ENCODE measurements at regions of chr13 and their contacts with region 1.

Region 1: DNA sequence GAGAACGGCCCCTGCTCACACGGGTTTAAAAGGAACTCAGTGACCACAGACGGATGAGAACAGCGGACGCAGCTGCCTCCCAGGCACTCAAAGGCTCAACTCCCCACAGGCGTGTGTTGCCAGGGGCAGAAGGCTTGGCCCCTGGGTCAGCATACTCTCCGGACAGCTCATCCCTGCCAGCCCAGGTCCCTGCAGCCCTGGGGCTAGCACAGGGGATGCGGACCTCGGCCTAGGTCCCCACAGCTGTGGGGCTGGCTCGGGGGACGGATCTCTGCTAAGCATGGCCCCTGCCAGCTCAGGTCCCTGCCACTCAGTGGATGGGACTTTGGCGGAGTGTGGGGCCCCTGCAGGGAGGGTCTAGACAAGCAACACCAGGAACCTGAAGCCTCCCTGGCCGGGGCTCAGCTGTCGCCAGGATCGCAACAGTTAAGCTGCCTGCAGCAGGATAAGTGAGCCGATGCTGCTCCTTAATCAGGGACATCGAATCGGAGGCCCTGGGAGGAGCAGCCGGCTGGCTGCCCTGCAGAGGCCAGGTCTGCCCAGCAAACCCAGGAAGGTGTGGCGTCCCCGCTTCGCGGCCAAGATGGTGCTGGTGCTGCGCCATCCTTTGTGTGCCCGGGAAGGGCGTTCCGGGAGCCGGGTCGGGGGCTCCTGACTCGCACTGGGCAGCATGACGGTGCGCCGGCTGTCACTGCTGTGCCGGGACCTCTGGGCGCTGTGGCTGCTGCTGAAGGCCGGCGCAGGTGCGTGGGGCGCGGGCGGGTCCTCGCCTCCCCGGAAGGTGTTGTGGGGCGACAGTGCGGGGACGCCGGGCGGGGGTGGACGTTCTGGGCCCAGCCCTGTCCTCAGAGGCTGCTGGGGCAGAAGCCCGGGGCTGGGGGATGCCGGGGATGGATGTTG is 32.5 kb downstream of the MCF2L start:
- DNase-seq: peak; percentile 95
- H3K4me3 ChIP-seq: peak overlapping the region; percentile 46 to 52
- H3K27ac ChIP-seq: peak overlapping the region in 1 of 2 experiments; percentile 91; a peak in 2 of 4 replicates
- H3K4me1 ChIP-seq: peaks cover 0 to 47% of the 10 kb centered on the region in 2 experiments; a peak in 2 of 4 replicates
- H3K27me3 ChIP-seq: peaks cover 4% of the 10 kb centered on the region; the same call in 1 of the 2 replicates
- CTCF ChIP-seq: no peak
- EP300 ChIP-seq: peak in 1 of 2 experiments; percentile 43; a peak in 1 of 4 replicates
- RAD21 ChIP-seq: no peak; the same call in 1 of the 2 replicates

Region 2: DNA sequence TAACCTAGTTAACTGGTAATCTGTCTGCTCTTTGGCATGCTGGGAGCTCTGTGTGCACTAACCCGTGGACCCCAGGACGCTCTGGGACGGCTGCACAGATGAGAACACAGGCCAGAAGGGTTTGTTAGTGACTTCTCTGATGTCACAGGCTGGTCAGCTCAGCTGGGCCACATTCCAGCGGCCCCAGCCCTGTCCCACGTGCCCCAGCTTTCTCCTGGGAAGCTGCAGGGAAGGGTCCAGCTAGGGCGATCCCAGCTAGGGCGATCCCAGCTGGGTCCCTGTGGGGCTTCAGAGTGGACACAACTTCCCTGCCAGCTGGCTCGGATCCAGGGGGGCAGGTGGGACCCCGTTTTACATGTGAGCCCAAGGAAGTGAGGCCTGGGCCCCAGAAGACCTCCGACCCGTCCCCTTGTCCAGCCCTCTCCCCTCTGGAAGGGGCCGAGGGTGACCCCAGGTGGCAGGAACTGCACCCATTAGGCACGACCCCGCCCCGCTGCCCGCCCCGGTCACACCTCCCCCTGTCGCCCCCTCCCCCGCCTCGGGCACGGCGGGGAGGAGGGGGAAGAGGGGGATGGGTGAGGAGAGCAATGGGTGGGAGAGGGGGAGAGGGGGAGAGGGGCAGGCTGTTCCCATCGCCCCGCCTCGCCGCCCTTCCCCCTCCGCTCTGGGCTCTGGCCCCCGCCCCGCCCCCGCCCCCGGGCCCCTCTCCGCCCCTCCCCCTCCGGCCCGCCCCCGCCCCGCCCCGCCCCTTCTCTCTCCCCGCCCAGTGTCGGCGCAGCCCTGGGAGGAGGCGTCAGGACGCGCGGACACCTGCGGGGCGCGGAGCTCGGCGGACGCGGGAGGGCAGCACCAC is 107.7 kb before region 1 on chr13:
- CTCF ChIA-PET with region 1: no interaction called
- POLR2A ChIA-PET with region 1: no interaction called
- DNase-seq: peak; percentile 94
- H3K4me3 ChIP-seq: peak overlapping the region in 1 of 2 experiments; percentile 52; a peak in 2 of 4 replicates
- H3K27ac ChIP-seq: peak overlapping the region in 1 of 2 experiments; percentile 64; a peak in 1 of 4 replicates
- H3K4me1 ChIP-seq: peaks cover 0 to 12% of the 10 kb centered on the region in 2 experiments; a peak in 1 of 4 replicates
- H3K27me3 ChIP-seq: peaks cover 10% of the 10 kb centered on the region
- CTCF ChIP-seq: no peak
- EP300 ChIP-seq: no peak
- RAD21 ChIP-seq: no peak

Region 3: DNA sequence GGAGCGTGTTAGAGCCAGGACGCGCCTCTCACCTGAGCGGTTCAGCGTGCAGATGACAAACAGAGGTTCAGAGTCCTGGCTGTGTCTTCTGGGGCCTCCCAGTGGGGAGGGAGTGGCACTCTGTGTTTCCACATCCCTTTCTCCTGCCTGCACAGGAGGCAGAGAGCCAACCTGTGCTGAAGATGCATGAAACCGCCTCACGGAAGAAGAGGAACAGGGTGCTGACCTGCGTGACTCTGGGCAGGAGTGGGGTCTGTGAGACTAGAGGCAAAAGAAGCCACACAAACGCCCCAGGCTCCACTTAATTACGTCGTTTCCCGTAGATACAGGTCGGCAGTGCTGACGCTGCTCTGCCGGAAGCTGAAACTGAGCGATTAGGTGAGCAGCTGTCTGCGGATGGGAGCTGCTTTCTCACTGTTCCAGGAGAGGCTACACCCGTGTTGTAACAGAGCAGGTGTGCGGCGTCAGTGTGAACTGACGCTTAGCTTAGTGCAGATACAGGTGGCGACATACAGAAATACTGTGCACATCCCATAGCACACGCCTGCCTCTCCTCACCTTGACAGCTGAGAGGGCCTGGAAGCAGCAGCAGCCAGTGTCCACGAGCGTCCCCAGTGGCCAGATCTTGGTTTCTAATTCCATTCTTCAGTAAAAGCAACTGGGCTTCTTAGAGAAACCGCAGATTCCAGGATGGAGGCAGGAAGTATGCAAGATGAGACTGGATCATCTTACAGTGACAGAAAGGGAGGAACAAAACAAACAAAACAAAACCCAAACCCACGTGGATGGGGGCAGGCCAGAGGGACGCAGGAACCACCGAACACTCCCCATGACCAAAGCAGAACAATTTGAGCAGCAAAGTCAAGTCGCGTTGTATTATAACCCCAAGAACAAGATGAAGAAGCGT is 70.2 kb before region 1 on chr13:
- CTCF ChIA-PET with region 1: interaction called, 11 read pairs
- POLR2A ChIA-PET with region 1: interaction called, 4 read pairs
- DNase-seq: peak; percentile 71
- H3K4me3 ChIP-seq: no peak overlapping the region
- H3K27ac ChIP-seq: peak overlapping the region in 1 of 2 experiments; percentile 43; a peak in 1 of 4 replicates
- H3K4me1 ChIP-seq: peaks cover 0 to 50% of the 10 kb centered on the region in 2 experiments; a peak in 2 of 4 replicates
- H3K27me3 ChIP-seq: peaks cover 13% of the 10 kb centered on the region; the same call in 1 of the 2 replicates
- CTCF ChIP-seq: peak; percentile 69
- EP300 ChIP-seq: no peak
- RAD21 ChIP-seq: peak; percentile 58

Region 4: DNA sequence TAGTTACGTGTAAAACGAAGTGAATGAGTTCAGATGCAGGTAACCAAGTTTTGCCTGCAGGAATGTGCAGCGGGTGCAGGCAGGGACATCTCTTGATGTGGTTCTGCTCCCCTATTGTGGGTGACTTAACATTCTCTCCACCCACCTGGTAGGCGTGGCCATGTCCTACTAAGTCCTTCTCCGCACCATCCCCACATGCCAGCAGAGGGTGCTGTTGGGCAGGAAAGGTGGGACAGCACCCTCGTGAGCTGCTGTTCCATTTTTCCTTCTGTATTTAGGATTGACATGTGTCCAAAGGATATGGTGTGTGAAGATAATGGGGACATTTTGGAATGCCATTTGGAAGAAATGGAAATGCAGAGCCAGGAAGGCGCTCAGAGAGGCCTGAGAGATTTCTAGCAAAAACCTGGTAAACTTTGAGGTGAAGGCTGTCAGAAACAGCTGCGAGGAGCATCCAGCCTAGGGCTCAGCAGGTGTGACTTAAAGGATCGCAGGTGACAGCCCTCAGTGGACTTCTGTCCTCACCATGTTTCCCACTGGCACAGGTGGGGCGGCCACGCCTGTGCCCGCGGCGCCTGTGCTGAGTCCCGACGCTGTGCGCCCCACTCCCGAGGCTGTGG is 58.7 kb before region 1 on chr13:
- CTCF ChIA-PET with region 1: interaction called, 70 read pairs
- POLR2A ChIA-PET with region 1: interaction called, 15 read pairs
- DNase-seq: peak; percentile 93
- H3K4me3 ChIP-seq: peak overlapping the region; percentile 57 to 67
- H3K27ac ChIP-seq: no peak overlapping the region; a peak in 1 of 4 replicates
- H3K4me1 ChIP-seq: peaks cover 0 to 27% of the 10 kb centered on the region in 2 experiments; a peak in 2 of 4 replicates
- H3K27me3 ChIP-seq: no peaks in the 10 kb centered on the region; the same call in 1 of the 2 replicates
- CTCF ChIP-seq: peak; percentile 95
- EP300 ChIP-seq: peak in 1 of 2 experiments; percentile 48; a peak in 1 of 4 replicates
- RAD21 ChIP-seq: peak; percentile 99

Region 5: DNA sequence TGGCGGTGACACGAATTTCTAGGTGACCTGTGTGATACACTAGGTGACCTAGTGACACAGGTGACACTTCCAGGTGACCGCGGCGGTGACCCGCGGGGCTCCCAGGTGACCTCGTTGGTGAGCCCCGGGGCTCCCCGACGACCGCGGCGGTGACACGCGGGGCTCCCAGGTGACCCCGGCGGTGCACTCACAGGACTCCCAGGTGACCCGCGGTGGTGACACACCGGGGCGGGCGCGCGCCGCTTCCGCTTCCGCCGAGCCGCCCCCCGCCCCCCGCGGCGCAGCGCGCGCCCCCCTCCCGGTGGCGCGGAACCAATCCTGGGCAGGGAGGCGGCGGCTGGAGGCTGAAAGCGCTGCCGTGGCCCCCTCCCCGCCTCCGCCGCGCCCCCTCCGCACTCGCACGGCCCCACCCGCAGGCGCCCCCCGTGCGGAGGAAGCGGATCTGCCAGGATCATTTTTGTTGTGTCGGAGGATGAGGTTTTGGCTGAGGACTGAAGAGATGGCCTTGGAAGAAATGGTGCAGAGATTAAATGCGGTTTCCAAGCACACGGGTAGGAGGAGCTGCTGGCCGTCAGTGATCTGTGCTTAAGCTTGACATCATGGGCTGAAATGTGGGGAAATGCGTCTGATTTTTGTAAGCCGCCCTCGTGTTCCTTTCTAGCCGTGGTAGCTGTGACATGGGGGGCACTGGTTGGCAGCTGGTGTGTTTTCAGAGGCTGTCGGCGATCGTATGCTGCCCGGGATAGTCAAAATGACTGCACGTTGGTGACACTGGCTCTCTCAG is 32.4 kb before region 1 on chr13 and contains the start of gene MCF2L:
- CTCF ChIA-PET with region 1: interaction called, 19 read pairs
- POLR2A ChIA-PET with region 1: interaction called, 34 read pairs
- DNase-seq: peak; percentile 93
- H3K4me3 ChIP-seq: peak within 1 kb of the TSS; percentile 38 to 55
- H3K27ac ChIP-seq: peak within 1 kb of the TSS in 1 of 2 experiments; percentile 79; a peak in 2 of 4 replicates
- H3K4me1 ChIP-seq: peaks cover 0 to 19% of the 10 kb centered on the region in 2 experiments; a peak in 2 of 4 replicates
- H3K27me3 ChIP-seq: peaks cover 33% of the 10 kb centered on the region
- CTCF ChIP-seq: peak; percentile 25; the same call in 1 of the 2 replicates
- EP300 ChIP-seq: no peak
- RAD21 ChIP-seq: peak; percentile 52
- polyA plus RNA-seq, gene MCF2L: 0.56 and 1.1 TPM in 2 replicates

Region 6: DNA sequence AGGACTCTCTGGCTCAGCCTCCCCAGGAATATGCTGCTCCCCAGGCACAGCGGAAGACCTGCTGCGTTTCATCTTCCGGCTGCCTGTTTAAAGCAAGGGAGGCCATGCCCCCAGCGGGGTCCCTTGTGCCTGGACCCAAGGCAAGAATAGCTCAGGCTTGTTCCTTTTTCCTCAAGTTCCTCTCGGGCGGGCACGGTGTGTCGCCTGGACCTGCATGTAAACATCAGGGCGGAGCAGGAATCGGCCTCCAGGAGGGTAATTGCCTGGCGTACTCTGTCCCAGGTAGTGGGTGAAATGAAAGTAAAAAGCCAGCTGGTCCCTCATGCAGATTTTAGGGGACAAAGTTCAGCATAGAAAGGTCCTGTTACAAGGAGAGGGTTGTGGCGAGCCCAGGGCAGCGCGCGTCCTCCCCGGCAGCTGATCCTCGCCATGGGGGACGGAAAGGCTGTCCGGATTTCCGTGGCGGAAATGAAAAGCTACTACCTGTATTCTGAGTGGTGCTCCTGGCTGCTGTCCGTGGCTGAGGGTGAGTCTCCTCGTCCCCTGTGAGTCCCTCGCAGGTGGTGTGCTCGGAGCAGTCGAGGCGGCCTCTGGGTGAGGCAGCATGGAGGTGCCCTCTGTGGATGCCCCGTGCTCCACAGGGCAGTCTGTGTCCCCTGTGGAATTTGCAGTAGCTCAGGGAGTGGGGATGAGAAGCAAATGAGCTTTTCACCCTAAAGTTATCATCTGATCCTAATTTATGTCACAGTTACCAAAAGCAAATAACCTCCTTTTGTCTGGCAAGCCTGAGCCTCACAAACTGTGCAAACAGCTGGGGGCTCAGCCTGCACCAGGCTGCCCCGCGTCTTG is 16.3 kb before region 1 on chr13:
- CTCF ChIA-PET with region 1: interaction called, 10 read pairs
- POLR2A ChIA-PET with region 1: interaction called, 21 read pairs
- DNase-seq: no peak
- H3K4me3 ChIP-seq: no peak overlapping the region
- H3K27ac ChIP-seq: peak overlapping the region in 1 of 2 experiments; percentile 28; a peak in 1 of 4 replicates
- H3K4me1 ChIP-seq: peaks cover 0 to 63% of the 10 kb centered on the region in 2 experiments; a peak in 1 of 4 replicates
- H3K27me3 ChIP-seq: no peaks in the 10 kb centered on the region
- CTCF ChIP-seq: no peak
- EP300 ChIP-seq: no peak
- RAD21 ChIP-seq: no peak

Region 7: GRCh38 chr13:113078876-113079620 is 77.6 kb after region 1 on chr13:
- CTCF ChIA-PET with region 1: no interaction called
- POLR2A ChIA-PET with region 1: no interaction called
- DNase-seq: no peak
- H3K4me3 ChIP-seq: no peak overlapping the region
- H3K27ac ChIP-seq: no peak overlapping the region
- H3K4me1 ChIP-seq: peaks cover 0 to 4% of the 10 kb centered on the region in 2 experiments; a peak in 1 of 4 replicates
- H3K27me3 ChIP-seq: no peaks in the 10 kb centered on the region
- CTCF ChIP-seq: no peak
- EP300 ChIP-seq: no peak
- RAD21 ChIP-seq: no peak